ENCODE measurements at regions of chr7 and their contacts with region 1.

Region 1: DNA sequence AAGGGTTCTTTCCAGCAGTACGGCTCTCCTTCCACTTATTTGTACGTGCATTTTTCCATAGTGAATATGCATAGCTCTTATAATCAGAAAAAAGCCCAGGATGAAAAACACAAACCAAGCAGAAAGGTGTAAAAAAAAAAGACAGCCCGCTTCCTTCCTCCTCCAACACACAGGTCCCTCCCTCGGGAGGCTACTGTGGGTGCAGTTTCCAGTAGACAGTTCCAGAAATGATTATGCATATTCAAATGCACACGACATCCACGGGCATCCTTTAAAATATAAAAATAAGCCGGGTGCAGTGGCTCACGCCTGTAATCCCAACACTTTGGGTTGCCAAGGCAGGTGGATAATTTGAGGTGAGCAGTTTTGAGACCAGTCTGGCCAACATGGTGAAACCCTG is 59.9 kb downstream of the TNRC18 start:
- H3K4me3 Mint-ChIP-seq: no peak overlapping the region
- H3K27ac Mint-ChIP-seq: no peak overlapping the region
- H3K4me1 Mint-ChIP-seq: peaks cover 18% of the 10 kb centered on the region
- H3K27me3 Mint-ChIP-seq: no peaks in the 10 kb centered on the region

Region 2: GRCh38 chr7:4665661-4666060 is 698.1 kb before region 1 on chr7:
- intact Hi-C with region 1: no loop called
- H3K4me3 Mint-ChIP-seq: no peak overlapping the region
- H3K27ac Mint-ChIP-seq: no peak overlapping the region
- H3K4me1 Mint-ChIP-seq: no peaks in the 10 kb centered on the region
- H3K27me3 Mint-ChIP-seq: no peaks in the 10 kb centered on the region

Region 3: GRCh38 chr7:5450549-5451372 is 87.0 kb after region 1 on chr7:
- intact Hi-C with region 1: loop called (anchors 10 kb)
- H3K4me3 Mint-ChIP-seq: no peak overlapping the region
- H3K27ac Mint-ChIP-seq: peak overlapping the region; percentile 18
- H3K4me1 Mint-ChIP-seq: peaks cover 15% of the 10 kb centered on the region
- H3K27me3 Mint-ChIP-seq: peaks cover 33% of the 10 kb centered on the region